ENCODE measurements at regions of chr10 and their contacts with region 1.

Region 1: DNA sequence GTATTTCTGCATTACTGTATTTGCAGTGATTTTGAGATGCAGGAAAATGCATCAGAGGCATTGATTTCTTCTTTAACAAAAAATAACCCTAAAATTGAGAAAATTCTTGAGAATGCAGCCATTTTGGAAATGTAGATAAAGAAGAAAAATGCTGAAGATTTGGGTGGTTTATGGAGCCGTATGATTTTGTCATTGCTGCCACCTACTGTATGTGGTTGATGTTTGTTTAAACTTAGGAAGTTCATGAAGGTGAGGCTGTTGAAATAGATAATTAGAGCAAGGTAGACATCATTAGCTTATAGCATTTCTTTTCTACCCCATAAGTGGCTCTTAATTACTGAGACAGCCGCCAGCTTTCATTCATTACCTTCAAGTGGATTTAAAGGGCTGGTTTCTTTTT is 92.1 kb upstream of the SAMD8 start:
- DNase-seq: peak; percentile 74
- H3K4me3 Mint-ChIP-seq: no peak overlapping the region
- H3K27ac Mint-ChIP-seq: no peak overlapping the region
- H3K4me1 Mint-ChIP-seq: peaks cover 25% of the 10 kb centered on the region
- H3K27me3 Mint-ChIP-seq: no peaks in the 10 kb centered on the region

Region 2: DNA sequence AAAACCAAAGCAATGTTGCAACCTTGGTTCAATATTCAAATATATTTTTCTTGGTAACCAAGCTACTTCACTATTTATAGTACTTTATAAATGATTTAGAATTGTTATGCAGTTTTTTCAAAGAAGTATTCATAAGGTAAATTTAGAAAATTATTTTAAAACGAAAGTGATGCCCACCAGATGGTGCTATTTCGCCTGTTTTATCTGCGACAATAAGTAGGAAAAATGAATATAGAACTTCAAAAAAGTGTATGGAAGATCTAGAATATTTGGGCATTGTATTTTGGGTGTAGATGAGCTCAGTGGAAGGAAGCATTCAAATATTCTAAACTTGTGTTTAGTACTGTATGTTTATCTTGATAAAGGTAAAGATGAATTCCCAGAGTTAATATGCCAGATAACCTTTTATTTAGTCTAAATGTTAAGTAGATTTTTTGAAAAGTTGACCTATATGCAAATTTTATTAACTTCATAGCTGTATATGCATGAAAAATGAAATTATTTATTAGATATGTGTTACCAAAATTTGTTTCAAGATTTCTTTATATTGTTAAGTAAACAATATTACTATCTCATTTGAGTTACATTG is 775.2 kb before region 1 on chr10:
- intact Hi-C with region 1: loop called (anchors 2 kb)
- DNase-seq: peak; percentile 73
- H3K4me3 Mint-ChIP-seq: no peak overlapping the region
- H3K27ac Mint-ChIP-seq: no peak overlapping the region
- H3K4me1 Mint-ChIP-seq: peaks cover 2% of the 10 kb centered on the region
- H3K27me3 Mint-ChIP-seq: no peaks in the 10 kb centered on the region

Region 3: GRCh38 chr10:74262856-74263255 is 756.5 kb before region 1 on chr10:
- intact Hi-C with region 1: loop called (anchors 1 kb)
- DNase-seq: no peak
- H3K4me3 Mint-ChIP-seq: no peak overlapping the region
- H3K27ac Mint-ChIP-seq: peak overlapping the region; percentile 29
- H3K4me1 Mint-ChIP-seq: peaks cover 15% of the 10 kb centered on the region
- H3K27me3 Mint-ChIP-seq: no peaks in the 10 kb centered on the region

Region 4: GRCh38 chr10:74419958-74420375 is 599.4 kb before region 1 on chr10:
- intact Hi-C with region 1: loop called (anchors 10 kb)
- DNase-seq: peak; percentile 79
- H3K4me3 Mint-ChIP-seq: no peak overlapping the region
- H3K27ac Mint-ChIP-seq: no peak overlapping the region
- H3K4me1 Mint-ChIP-seq: peaks cover 6% of the 10 kb centered on the region
- H3K27me3 Mint-ChIP-seq: no peaks in the 10 kb centered on the region

Region 5: DNA sequence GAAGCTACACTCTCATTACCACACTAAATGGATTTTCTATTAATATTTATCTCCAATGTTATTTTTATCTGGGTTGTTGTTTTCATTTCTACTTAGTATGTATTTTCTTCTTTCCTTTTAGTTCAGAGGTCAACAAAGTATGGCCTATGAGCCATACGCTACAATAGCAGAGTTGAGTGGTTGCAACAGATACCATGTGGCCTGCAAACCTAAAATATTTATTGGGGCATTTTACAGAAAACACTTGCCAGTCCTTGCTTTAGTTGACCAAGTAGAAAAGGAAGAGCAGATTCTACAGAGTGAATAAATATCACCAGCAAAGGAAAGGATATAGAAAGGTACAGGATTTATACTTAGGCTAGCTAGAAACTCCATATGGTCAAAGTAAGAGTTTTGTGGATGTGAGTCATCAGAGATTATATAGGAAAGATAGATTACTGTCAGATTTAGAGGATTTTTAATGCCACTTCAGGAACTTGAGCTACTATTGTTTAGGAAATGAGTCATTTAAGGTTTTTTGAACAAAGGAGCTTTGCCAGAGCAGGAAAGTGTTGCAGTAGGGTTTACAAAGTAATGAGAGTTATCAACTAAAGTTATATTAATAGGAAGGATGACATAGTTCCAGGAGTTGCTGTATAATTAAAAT is 516.3 kb before region 1 on chr10:
- intact Hi-C with region 1: loop called (anchors 5 kb)
- DNase-seq: no peak
- H3K4me3 Mint-ChIP-seq: peak overlapping the region; percentile 19
- H3K27ac Mint-ChIP-seq: peak overlapping the region; percentile 83
- H3K4me1 Mint-ChIP-seq: peaks cover 31% of the 10 kb centered on the region
- H3K27me3 Mint-ChIP-seq: no peaks in the 10 kb centered on the region

Region 6: GRCh38 chr10:74753442-74754211 is 265.7 kb before region 1 on chr10:
- intact Hi-C with region 1: loop called (anchors 5 kb)
- DNase-seq: no peak
- H3K4me3 Mint-ChIP-seq: no peak overlapping the region
- H3K27ac Mint-ChIP-seq: no peak overlapping the region
- H3K4me1 Mint-ChIP-seq: peaks cover 12% of the 10 kb centered on the region
- H3K27me3 Mint-ChIP-seq: no peaks in the 10 kb centered on the region

Region 7: GRCh38 chr10:75099952-75100763 is 80.8 kb after region 1 on chr10:
- intact Hi-C with region 1: loop called (anchors 5 kb)
- DNase-seq: peak; percentile 94
- H3K4me3 Mint-ChIP-seq: no peak overlapping the region
- H3K27ac Mint-ChIP-seq: peak overlapping the region; percentile 59
- H3K4me1 Mint-ChIP-seq: peaks cover 6% of the 10 kb centered on the region
- H3K27me3 Mint-ChIP-seq: no peaks in the 10 kb centered on the region

Measured in activated CD4-positive, alpha-beta T cell treated with anti-CD3 and anti-CD28 coated beads, Interleukin-2, amount 10 ng/mL, durations not matched to agents 24 days and 14 days (primary cell).